Right ventricle myocardium inferior (tissue), 1 donor: ENCODE measurements at regions of chr13 and their contacts with region 1.

Region 1: GRCh38 chr13:31199849-31200636 is at the start of gene B3GLCT:
- DNase-seq: peak; percentile 93
- ATAC-seq: peak; percentile 89
- total RNA-seq, gene B3GLCT: 15.4 TPM

Region 2: DNA sequence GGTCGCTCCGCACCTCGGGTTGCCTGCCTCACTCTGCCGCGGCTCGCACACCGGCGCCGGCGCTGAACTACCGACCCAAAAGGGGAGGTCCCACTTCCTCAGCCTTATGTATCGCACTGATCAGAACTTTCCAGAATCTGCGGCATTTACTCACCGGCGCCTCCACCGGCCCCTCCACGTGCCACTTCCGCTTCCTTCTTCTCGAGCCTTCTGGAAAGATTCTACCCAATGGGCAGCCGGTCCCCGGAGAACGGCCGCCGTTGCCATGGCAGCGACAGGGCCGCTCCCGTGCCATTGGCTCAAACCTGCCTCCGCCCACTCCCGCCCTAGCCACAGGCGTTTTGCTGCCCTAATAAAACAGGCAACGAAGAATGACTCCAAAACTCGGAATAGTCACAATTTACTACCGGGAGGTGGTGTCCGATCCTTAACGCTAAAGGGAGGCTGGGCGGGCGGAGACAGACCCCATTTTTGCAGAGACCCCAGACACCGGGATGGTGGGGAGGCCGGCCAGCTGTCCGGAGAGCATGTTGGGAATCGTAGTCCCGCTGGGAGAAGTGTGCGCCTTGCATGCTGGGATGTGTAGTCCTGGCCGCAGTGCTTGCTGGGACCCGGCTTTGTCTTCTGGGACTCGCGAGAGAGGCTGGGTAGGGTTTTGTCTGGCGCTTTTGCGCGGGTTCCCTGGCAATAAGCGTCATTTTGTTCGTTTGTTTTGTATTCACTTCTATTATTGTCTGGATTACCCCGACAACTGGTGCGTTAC is 38.0 kb before region 1 on chr13 and contains the start of gene HSPH1:
- intact Hi-C with region 1: loop called (anchors 2 kb)
- DNase-seq: peak; percentile 100
- ATAC-seq: peak; percentile 98
- total RNA-seq, gene HSPH1: 74.7 TPM

Region 3: GRCh38 chr13:31236211-31236786 is 36.3 kb after region 1 on chr13:
- intact Hi-C with region 1: loop called (anchors 5 kb)
- DNase-seq: no peak
- ATAC-seq: no peak

Region 4: GRCh38 chr13:31424117-31424729 is 224.2 kb after region 1 on chr13:
- intact Hi-C with region 1: loop called (anchors 10 kb)
- DNase-seq: peak; percentile 81
- ATAC-seq: peak; percentile 94